Activated naive CD8-positive, alpha-beta T cell treated with anti-CD3 and anti-CD28 coated beads, Interleukin-2, amount 10 ng/mL, durations not matched to agents 7 days and 5 days (primary cell): ENCODE measurements at regions of chr19 and their contacts with region 1.

Region 1: GRCh38 chr19:48637170-48637947 is at the start of gene DBP:
- DNase-seq: peak; percentile 97
- ATAC-seq: peak; percentile 85
- H3K4me3 Mint-ChIP-seq: peak within 1 kb of the TSS; percentile 92
- H3K27ac Mint-ChIP-seq: peak within 1 kb of the TSS; percentile 99
- H3K4me1 Mint-ChIP-seq: peaks cover 34% of the 10 kb centered on the region
- H3K27me3 Mint-ChIP-seq: no peaks in the 10 kb centered on the region
- total RNA-seq, gene DBP: 34.0 to 34.8 TPM

Region 2: DNA sequence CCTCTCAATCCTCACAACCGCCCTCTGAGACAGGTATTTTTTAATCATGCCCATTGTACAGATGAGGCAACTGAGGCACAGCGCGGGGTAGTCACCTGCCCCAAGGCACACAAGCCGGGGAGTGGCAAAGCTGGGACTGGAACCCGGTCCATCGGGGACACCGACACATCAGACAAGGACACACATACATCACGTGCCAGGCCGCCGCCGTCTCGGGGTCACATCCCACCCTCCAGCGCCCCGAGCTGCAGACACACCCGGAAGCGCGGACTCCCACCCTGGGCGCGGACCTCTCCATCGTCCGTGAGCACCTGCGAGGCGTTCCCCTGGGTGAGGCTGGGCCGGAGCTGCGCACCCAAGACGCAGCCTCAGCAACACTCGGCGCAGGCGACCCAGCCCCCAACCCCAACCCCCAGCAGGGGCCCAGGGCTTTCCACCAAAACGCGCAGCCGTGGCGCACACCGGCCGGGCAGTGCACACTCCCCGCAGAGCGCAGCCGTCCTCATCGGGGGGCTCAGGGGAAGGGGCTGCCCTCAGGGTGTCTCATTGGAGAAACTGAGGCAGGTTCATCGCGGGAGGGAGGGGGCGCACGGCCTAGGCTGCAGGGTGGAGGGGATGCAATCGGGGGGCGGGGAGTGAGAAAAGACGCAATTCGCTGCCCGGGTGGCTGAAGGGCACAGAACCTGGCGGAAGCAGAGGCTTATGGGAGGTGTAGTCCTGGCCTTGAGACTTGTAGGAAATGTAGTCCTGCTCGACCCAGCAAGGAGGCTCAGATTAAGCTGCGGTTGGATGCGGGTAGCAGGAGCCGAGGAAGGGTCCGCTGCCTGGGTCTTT is 123.9 kb before region 1 on chr19:
- POLR2A ChIA-PET with region 1: no interaction called
- DNase-seq: peak; percentile 71
- ATAC-seq: peak; percentile 78
- H3K4me3 Mint-ChIP-seq: no peak overlapping the region
- H3K27ac Mint-ChIP-seq: peak overlapping the region; percentile 57
- H3K4me1 Mint-ChIP-seq: peaks cover 9% of the 10 kb centered on the region
- H3K27me3 Mint-ChIP-seq: no peaks in the 10 kb centered on the region

Region 3: DNA sequence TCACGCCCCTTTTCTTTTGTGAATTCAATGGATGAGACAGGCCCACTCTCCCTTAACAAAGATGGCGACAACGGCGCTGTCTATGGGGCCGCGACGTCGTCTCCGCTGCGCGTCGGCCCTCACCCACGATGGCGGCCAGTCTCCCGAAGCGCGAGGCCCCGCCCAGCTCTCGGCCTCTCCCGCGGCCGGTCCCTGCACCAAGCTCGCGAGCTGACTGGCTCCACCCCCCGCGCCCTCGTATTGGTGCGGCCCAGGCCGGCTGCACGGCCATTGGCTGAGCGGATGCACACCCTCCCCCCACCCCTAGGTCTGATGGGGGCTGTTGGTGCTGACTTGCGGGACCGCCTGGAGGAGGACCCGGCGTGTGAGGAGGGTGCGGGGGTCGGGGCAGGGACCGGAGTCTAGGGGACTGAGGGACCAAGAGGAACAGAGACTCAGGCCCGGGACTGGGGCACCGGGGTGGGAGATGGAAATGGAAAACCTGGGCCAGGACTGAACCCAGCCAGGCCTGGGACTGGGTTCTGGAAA is 13.2 kb before region 1 on chr19:
- POLR2A ChIA-PET with region 1: interaction called, 37 read pairs
- DNase-seq: peak; percentile 98
- ATAC-seq: peak; percentile 82
- H3K4me3 Mint-ChIP-seq: peak overlapping the region; percentile 92
- H3K27ac Mint-ChIP-seq: peak overlapping the region; percentile 97
- H3K4me1 Mint-ChIP-seq: peaks cover 41% of the 10 kb centered on the region
- H3K27me3 Mint-ChIP-seq: no peaks in the 10 kb centered on the region